OCI-LY7 (cell line): ENCODE measurements at regions of chr4 and their contacts with region 1.

Region 1: GRCh38 chr4:146059865-146060264 is 115.7 kb upstream of the LSM6 start:
- DNase-seq: peak; percentile 94
- H3K4me3 ChIP-seq: peak overlapping the region; percentile 60
- H3K27ac ChIP-seq: peak overlapping the region; percentile 96
- H3K4me1 ChIP-seq: peaks cover 96% of the 10 kb centered on the region
- CTCF ChIP-seq: no peak

Region 2: DNA sequence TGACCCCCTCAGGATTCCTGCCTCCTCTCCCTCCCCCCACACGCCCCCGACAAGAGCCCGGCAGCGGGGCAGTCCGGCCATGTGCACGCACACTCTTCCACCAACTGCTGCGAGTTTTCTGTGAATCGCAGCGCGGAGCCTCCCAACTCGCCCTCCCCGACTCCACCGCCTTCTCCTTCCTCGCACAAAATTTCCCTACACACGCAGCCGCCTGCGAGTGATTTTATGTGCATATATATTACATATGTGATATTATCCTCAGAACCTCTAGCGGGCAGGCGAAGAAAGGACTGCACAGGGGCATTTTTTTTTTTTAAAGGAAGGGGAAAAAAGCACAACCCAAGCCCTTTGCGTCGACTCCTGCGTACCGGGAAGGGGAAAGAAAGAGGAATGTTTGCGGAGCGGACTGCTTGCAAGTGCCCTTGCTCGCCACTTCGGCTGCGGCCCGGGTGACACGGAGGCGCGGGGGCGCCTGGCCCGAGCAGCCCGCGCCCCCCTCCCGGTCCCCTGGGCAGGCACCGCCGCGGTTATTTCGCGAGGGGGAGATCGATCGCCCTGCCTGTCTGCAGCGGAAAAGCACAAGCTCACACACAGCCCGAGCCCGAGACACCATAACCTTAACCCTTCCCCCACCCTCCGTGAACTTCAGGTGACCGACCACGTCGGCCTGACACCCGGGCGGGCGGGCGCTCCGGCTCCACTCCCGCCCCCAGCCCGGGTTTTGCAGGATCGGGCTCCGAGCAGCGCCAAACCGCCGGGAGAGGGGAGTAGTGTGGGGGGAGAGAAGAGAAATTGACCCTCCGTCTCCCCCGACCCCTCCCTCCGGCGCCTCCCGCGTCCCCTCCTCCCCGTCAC is 123.5 kb before region 1 on chr4:
- CTCF ChIA-PET with region 1: no interaction called
- POLR2A ChIA-PET with region 1: interaction called, 6 read pairs
- intact Hi-C with region 1: loop called (anchors 2 kb)
- DNase-seq: peak; percentile 89
- H3K4me3 ChIP-seq: peak overlapping the region; percentile 87
- H3K27ac ChIP-seq: peak overlapping the region; percentile 92
- H3K4me1 ChIP-seq: peaks cover 58% of the 10 kb centered on the region
- CTCF ChIP-seq: peak; percentile 67

Region 3: DNA sequence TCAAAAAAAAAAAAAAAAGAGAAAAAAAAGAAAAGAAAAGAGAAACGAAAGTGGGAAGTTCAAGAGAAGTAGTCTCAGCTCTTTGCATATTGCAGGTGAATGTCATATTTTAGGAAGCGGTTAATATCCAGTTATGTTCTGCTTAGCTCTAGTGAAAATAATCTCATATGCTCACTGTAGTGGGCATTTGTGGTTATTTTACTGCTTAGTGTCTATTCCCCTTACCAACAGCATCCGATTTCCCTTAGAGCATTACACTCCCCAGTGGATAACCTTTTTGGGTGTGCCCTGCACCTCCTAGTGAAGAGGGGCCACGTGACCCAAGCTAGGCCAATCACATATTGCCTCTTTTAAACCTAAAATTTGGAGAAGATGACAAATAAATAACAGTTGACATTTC is 10.1 kb before region 1 on chr4:
- CTCF ChIA-PET with region 1: interaction called, 27 read pairs
- POLR2A ChIA-PET with region 1: interaction called, 97 read pairs
- intact Hi-C with region 1: no loop called
- DNase-seq: peak; percentile 95
- H3K4me3 ChIP-seq: peak overlapping the region; percentile 43
- H3K27ac ChIP-seq: peak overlapping the region; percentile 98
- H3K4me1 ChIP-seq: peaks cover 66% of the 10 kb centered on the region
- CTCF ChIP-seq: 0 out of 2 replicates have a peak, but pooled peaks have one; percentile 28

Region 4: DNA sequence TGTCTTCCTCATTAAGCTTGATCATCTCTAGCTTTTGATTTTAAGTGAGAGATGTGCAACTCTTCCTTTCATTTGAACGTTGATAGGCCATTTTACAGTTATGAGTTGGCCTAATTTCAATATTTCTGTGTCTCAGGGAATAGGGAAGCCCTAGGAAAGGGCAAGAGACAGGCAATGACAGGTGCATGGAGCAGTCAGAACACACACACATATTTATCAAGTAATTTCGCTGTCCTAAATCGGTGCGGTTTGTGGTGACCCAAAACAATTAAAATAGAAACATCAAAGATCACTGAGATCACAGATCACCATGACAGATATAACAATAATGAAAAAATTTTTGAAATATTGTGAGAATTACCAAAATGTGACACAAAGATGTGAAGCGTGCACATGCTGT is 28.0 kb after region 1 on chr4:
- CTCF ChIA-PET with region 1: interaction called, 3 read pairs
- POLR2A ChIA-PET with region 1: interaction called, 41 read pairs
- intact Hi-C with region 1: no loop called
- DNase-seq: no peak
- H3K4me3 ChIP-seq: no peak overlapping the region
- H3K27ac ChIP-seq: no peak overlapping the region
- H3K4me1 ChIP-seq: peaks cover 15% of the 10 kb centered on the region
- CTCF ChIP-seq: no peak

Region 5: GRCh38 chr4:146654687-146655520 is 595.0 kb after region 1 on chr4:
- CTCF ChIA-PET with region 1: no interaction called
- POLR2A ChIA-PET with region 1: no interaction called
- intact Hi-C with region 1: no loop called
- DNase-seq: no peak
- H3K4me3 ChIP-seq: no peak overlapping the region
- H3K27ac ChIP-seq: no peak overlapping the region
- H3K4me1 ChIP-seq: no peaks in the 10 kb centered on the region
- CTCF ChIP-seq: no peak